ENCODE measurements at regions of chr6 and their contacts with region 1.

Region 1: GRCh38 chr6:154352898-154353585 is 3.6 kb downstream of the IPCEF1 start:
- DNase-seq: peak; percentile 84
- ATAC-seq: peak; percentile 77
- H3K4me3 ChIP-seq: no peak overlapping the region; the same call in 1 of the 2 replicates
- H3K27ac ChIP-seq: no peak overlapping the region
- H3K4me1 ChIP-seq: peaks cover 33% of the 10 kb centered on the region
- H3K27me3 ChIP-seq: no peaks in the 10 kb centered on the region
- CTCF ChIP-seq: no peak
- EP300 ChIP-seq: peak; percentile 87 to 92
- POLR2A ChIP-seq: no peak
- RAD21 ChIP-seq: 0 out of 2 replicates have a peak, but pooled peaks have one; percentile 4

Region 2: GRCh38 chr6:154301839-154302752 is 50.9 kb before region 1 on chr6:
- CTCF ChIA-PET with region 1: interaction called, 3 read pairs
- POLR2A ChIA-PET with region 1: no interaction called
- RAD21 ChIA-PET with region 1: no interaction called
- SMC1A ChIA-PET with region 1: no interaction called
- in situ Hi-C with region 1: no loop called
- intact Hi-C with region 1: loop called (anchors 1 kb)
- DNase-seq: peak; percentile 90
- ATAC-seq: peak; percentile 95
- H3K4me3 ChIP-seq: no peak overlapping the region
- H3K27ac ChIP-seq: peak overlapping the region; percentile 36; the same call in 1 of the 2 replicates
- H3K4me1 ChIP-seq: peaks cover 23% of the 10 kb centered on the region
- H3K27me3 ChIP-seq: no peaks in the 10 kb centered on the region
- CTCF ChIP-seq: no peak
- EP300 ChIP-seq: peak; percentile 87 to 96
- POLR2A ChIP-seq: no peak
- RAD21 ChIP-seq: no peak